Panc1 (cell line): ENCODE measurements at regions of chr9 and their contacts with region 1.

Region 1: DNA sequence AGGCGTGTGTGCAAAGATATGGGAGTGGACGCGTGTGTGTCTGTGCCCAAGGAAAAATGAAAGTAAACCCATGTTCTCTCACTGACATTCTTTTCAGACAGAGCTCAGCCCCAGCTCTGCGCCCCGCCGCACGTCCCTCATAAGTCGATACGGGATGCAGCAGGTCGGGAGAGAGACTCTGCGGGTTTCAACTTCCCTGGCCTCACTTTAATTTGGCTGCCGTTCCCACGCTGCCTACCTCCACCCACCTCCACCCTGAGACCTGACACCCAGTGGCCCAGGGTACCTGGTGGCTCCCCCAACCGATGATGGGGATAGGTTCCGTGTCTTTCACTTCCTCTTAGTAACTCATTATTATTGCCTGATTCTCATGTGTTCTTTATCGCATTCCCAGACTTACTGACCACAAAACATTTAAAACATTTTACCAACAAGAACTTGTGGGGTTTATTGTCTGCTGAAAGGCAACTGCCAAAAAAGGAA is 19.4 kb downstream of the LHX2 start:
- DNase-seq: no peak
- ATAC-seq: peak; percentile 52; the same call in 1 of the 2 replicates
- H3K4me3 ChIP-seq: peak overlapping the region; percentile 24 to 48
- H3K27ac ChIP-seq: no peak overlapping the region
- H3K4me1 ChIP-seq: no peaks in the 10 kb centered on the region
- H3K27me3 ChIP-seq: no peaks in the 10 kb centered on the region
- CTCF ChIP-seq: no peak

Region 2: DNA sequence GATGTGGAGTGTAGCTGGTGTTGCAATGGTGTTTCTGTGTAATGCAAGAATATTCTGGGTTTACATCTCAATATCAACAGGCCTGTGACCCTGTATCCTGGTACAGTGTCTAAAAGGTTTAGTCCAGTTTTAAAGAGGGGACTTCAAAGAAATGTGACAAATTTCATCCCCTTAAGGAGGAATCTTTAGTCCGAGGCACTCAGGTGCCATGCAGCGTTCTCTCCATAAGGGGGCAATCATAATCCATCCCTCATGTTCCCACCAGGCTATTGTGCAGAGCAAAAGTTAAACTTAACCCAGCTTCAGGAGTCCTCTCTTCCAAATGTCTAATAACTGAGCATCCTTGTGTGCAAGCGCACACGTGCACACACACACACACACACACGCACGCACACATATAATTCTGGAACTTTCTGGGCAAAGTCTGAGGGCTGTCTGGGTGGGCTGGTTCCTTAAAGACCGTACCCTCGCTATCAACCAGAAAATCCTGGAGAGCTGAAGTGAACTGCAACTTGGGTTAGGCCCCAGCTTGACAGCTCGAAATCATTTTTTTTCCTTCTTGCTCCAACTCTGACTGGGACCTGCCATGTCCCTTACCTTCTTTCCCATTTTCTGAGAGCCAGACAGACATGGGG is 629.0 kb before region 1 on chr9:
- CTCF ChIA-PET with region 1: no interaction called
- POLR2A ChIA-PET with region 1: no interaction called
- in situ Hi-C with region 1: no loop called
- intact Hi-C with region 1: loop called (anchors 5 kb)
- DNase-seq: peak; percentile 18
- ATAC-seq: peak; percentile 90
- H3K4me3 ChIP-seq: no peak overlapping the region
- H3K27ac ChIP-seq: no peak overlapping the region
- H3K4me1 ChIP-seq: no peaks in the 10 kb centered on the region
- H3K27me3 ChIP-seq: no peaks in the 10 kb centered on the region
- CTCF ChIP-seq: peak; percentile 80

Region 3: DNA sequence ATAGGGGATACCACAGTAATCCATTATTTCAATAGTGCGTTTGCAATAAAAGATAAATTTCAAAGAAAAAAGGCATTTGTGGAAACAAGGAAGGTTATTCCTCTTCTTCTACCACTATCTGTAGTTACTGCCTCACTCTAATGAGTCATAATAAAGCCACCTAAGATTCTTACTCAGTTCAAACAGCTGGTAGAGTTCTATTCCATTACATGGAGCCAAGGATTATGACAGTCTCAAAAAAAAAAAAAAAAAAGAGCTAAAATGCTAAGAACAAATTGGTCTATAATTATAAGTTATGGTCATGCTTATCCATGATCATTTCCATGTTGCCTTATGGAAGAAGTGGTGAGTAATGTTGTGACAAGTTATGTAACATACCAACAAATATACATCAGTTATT is 147.4 kb before region 1 on chr9:
- CTCF ChIA-PET with region 1: no interaction called
- POLR2A ChIA-PET with region 1: no interaction called
- in situ Hi-C with region 1: no loop called
- intact Hi-C with region 1: no loop called
- DNase-seq: no peak
- ATAC-seq: no peak
- H3K4me3 ChIP-seq: no peak overlapping the region
- H3K27ac ChIP-seq: no peak overlapping the region
- H3K4me1 ChIP-seq: no peaks in the 10 kb centered on the region
- H3K27me3 ChIP-seq: no peaks in the 10 kb centered on the region
- CTCF ChIP-seq: no peak